Calu3 (cell line): ENCODE measurements at regions of chr1 and their contacts with region 1.

Region 1: DNA sequence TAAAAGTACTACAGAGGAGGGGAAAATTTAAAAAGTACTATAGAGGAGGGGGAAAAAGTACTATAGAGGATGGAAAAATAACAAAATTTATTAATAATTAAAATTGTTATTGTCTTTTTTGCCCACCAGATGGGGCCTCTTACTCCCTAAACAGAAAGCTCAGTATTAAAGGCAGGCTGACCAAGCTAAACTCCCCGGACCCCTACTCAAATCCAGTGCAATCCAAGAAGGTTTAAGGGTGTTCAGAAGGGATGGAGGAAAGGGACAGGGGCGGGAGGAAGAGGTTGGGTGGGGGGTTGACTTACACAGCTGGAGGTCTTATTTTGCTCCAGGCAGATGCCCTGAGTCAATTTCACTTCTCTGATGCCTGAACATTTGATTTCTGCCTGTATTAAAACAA is 13.7 kb downstream of the CD34 start:
- DNase-seq: no peak
- H3K4me3 Mint-ChIP-seq: no peak overlapping the region
- H3K27ac Mint-ChIP-seq: no peak overlapping the region
- H3K4me1 Mint-ChIP-seq: no peaks in the 10 kb centered on the region
- H3K27me3 Mint-ChIP-seq: no peaks in the 10 kb centered on the region
- CTCF ChIP-seq: peak; percentile 65

Region 2: GRCh38 chr1:207935166-207935583 is 38.0 kb after region 1 on chr1:
- CTCF ChIA-PET with region 1: interaction called, 6 read pairs
- intact Hi-C with region 1: loop called (anchors 1 kb)
- DNase-seq: peak; percentile 69
- H3K4me3 Mint-ChIP-seq: peak overlapping the region; percentile 43
- H3K27ac Mint-ChIP-seq: peak overlapping the region; percentile 71
- H3K4me1 Mint-ChIP-seq: peaks cover 62% of the 10 kb centered on the region
- H3K27me3 Mint-ChIP-seq: no peaks in the 10 kb centered on the region
- CTCF ChIP-seq: no peak

Region 3: DNA sequence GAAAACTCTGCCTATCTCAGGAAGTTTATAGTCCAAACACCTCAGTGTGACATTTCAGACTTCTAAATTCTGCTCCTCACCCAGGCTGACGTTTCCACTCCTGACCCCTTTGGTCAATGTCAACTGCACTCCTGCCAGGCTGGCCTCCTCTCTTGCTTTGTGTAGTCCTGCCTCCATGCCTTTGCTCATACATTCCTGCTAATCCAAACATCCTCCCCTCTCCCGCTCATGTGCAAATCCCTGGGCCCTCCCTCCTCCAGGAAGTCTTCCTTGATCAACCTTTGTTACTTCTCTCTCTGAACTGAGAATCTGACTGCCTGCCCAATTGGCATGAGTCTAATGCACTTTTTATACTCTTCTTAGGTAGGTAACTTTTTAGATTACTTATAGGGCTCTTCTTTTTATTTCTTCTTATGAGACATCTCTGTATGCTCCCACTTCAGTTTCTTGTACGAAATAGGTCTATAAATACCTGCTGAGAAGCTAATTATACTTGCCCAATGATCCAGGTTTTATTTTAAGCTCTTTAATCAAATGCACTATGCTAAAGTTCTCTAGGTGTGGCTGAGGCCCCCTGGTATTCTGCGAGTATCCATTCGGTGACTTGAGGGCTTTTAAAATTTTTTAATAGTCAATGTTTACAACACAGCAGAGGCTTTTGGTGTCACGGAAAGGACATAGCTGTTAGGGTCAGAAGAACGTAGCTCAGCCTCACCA is 218.9 kb after region 1 on chr1:
- CTCF ChIA-PET with region 1: no interaction called
- intact Hi-C with region 1: no loop called
- DNase-seq: no peak
- H3K4me3 Mint-ChIP-seq: no peak overlapping the region
- H3K27ac Mint-ChIP-seq: no peak overlapping the region
- H3K4me1 Mint-ChIP-seq: peaks cover 12% of the 10 kb centered on the region
- H3K27me3 Mint-ChIP-seq: no peaks in the 10 kb centered on the region
- CTCF ChIP-seq: no peak